Activated B cell treated with CpG ODN at 0.5 μM for 24 hours (primary cell): ENCODE measurements at regions of chr2 and their contacts with region 1.

Region 1: DNA sequence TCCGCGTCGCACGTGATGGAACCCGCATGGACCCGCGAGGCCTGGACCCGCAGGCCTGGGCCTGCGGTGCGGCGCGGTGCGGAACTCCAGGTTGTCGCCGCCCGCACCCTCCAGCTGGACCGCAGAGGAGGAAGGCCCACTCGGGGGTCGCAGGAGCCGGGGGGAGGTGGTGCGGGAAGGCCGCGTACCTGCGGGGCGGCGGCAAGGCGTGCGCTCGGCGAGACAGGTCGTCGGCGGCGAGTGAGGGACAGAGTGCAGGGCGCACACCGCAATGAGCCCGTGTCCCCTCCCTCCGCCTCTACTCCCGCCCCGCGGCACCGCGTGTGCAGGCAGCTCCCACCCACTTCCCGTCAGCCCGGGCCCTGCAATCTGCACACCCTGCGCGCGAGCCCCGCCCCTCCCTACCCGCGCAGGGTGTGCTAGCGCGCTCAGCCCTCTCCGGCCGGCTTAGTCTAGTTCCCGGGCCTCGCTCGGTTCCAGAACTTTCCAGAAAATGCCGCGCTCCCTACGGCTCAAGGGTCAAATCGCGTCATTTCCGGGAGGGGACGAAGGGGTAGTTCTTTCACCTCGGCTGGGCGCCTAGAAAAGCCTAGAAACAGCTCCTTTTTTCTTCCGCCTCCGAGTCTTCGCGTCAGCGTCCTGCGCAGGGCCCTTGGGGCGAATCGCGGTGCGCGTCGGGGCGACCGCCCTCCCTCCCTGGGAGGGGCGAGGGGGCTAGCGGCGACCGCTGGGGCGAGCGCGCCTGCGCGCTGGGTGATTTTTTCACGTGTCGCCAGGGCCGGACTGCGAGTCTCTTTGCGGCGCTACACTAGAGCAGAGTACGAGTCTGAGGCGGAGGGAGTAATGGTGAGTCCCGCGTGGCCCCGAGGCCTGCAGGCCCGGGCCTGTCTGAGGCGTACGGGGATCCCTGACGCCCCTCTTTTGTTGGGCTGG is at the starts of genes HSPD1 and HSPE1:
- DNase-seq: peak; percentile 93
- ATAC-seq: peak; percentile 84
- H3K4me3 Mint-ChIP-seq: peak within 1 kb of the TSS; percentile 97
- H3K27ac Mint-ChIP-seq: peak within 1 kb of the TSS; percentile 94
- H3K4me1 Mint-ChIP-seq: peaks cover 59% of the 10 kb centered on the region
- H3K27me3 Mint-ChIP-seq: no peaks in the 10 kb centered on the region
- CTCF ChIP-seq: no peak
- total RNA-seq, gene HSPD1: 250 and 252 TPM in 2 replicates
- total RNA-seq, gene HSPE1: 108 and 116 TPM in 2 replicates

Region 2: GRCh38 chr2:196798980-196799379 is 700.9 kb before region 1 on chr2:
- CTCF ChIA-PET with region 1: no interaction called
- POLR2A ChIA-PET with region 1: interaction called, 15 read pairs
- intact Hi-C with region 1: loop called (anchors 10 kb)
- DNase-seq: no peak
- ATAC-seq: no peak
- H3K4me3 Mint-ChIP-seq: peak overlapping the region; percentile 97
- H3K27ac Mint-ChIP-seq: peak overlapping the region; percentile 92
- H3K4me1 Mint-ChIP-seq: peaks cover 18% of the 10 kb centered on the region
- H3K27me3 Mint-ChIP-seq: peaks cover 7% of the 10 kb centered on the region
- CTCF ChIP-seq: no peak

Region 3: GRCh38 chr2:197434541-197435513 is 65.0 kb before region 1 on chr2 and contains the start of gene SF3B1:
- CTCF ChIA-PET with region 1: no interaction called
- POLR2A ChIA-PET with region 1: interaction called, 63 read pairs
- intact Hi-C with region 1: loop called (anchors 1 kb)
- DNase-seq: peak; percentile 98
- ATAC-seq: peak; percentile 96
- H3K4me3 Mint-ChIP-seq: peak within 1 kb of the TSS; percentile 99
- H3K27ac Mint-ChIP-seq: peak within 1 kb of the TSS; percentile 100
- H3K4me1 Mint-ChIP-seq: peaks cover 62% of the 10 kb centered on the region
- H3K27me3 Mint-ChIP-seq: no peaks in the 10 kb centered on the region
- CTCF ChIP-seq: no peak
- total RNA-seq, gene SF3B1: 328 and 380 TPM in 2 replicates

Region 4: GRCh38 chr2:197480165-197481036 is 19.5 kb before region 1 on chr2:
- CTCF ChIA-PET with region 1: no interaction called
- POLR2A ChIA-PET with region 1: interaction called, 9 read pairs
- intact Hi-C with region 1: loop called (anchors 2 kb)
- DNase-seq: no peak
- ATAC-seq: no peak
- H3K4me3 Mint-ChIP-seq: no peak overlapping the region
- H3K27ac Mint-ChIP-seq: no peak overlapping the region
- H3K4me1 Mint-ChIP-seq: no peaks in the 10 kb centered on the region
- H3K27me3 Mint-ChIP-seq: no peaks in the 10 kb centered on the region
- CTCF ChIP-seq: no peak

Region 5: DNA sequence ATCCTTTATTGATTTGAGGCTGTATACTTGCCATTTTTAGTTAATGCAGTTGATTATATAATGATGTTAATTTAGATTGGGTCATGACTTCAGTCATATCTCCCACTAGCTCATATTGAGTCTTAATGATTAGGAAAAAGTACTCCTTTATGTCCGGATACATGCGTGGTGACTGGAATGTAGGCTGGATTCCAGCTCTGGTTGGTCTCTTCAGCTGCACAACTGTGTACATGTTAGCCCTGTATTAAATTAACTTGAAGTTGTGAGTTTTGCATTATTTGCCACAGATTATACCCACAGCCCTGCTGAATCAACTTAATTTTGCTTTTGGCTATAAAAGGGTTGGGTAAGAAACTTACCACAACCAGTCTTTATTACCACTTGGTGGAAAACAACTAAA is 38.6 kb after region 1 on chr2:
- CTCF ChIA-PET with region 1: no interaction called
- POLR2A ChIA-PET with region 1: no interaction called
- intact Hi-C with region 1: loop called (anchors 5 kb)
- DNase-seq: no peak
- ATAC-seq: no peak
- H3K4me3 Mint-ChIP-seq: no peak overlapping the region
- H3K27ac Mint-ChIP-seq: no peak overlapping the region
- H3K4me1 Mint-ChIP-seq: peaks cover 14% of the 10 kb centered on the region
- H3K27me3 Mint-ChIP-seq: no peaks in the 10 kb centered on the region
- CTCF ChIP-seq: no peak

Region 6: GRCh38 chr2:197777823-197778407 is 278.1 kb after region 1 on chr2:
- CTCF ChIA-PET with region 1: no interaction called
- POLR2A ChIA-PET with region 1: no interaction called
- intact Hi-C with region 1: loop called (anchors 5 kb)
- DNase-seq: no peak
- ATAC-seq: no peak
- H3K4me3 Mint-ChIP-seq: no peak overlapping the region
- H3K27ac Mint-ChIP-seq: no peak overlapping the region
- H3K4me1 Mint-ChIP-seq: no peaks in the 10 kb centered on the region
- H3K27me3 Mint-ChIP-seq: peaks cover 7% of the 10 kb centered on the region
- CTCF ChIP-seq: peak; percentile 23